PC-9 (cell line): ENCODE measurements at regions of chr20 and their contacts with region 1.

Region 1: GRCh38 chr20:33584976-33585375 is 77.2 kb upstream of the C20orf144 start:
- DNase-seq: no peak
- H3K4me3 ChIP-seq: no peak overlapping the region
- H3K27ac ChIP-seq: no peak overlapping the region
- H3K4me1 ChIP-seq: 0 out of 2 replicates have a peak, but pooled peaks cover 4% of the 10 kb centered on the region
- H3K27me3 ChIP-seq: no peaks in the 10 kb centered on the region
- CTCF ChIP-seq: no peak

Region 2: GRCh38 chr20:33554914-33555420 is 30.0 kb before region 1 on chr20:
- CTCF ChIA-PET with region 1: no interaction called
- POLR2A ChIA-PET with region 1: interaction called, 11 read pairs
- intact Hi-C with region 1: no loop called
- DNase-seq: peak; percentile 11 to 71
- H3K4me3 ChIP-seq: no peak overlapping the region
- H3K27ac ChIP-seq: 0 out of 2 replicates have a peak overlapping the region, but pooled peaks have one; percentile 9
- H3K4me1 ChIP-seq: peaks cover 13% of the 10 kb centered on the region
- H3K27me3 ChIP-seq: no peaks in the 10 kb centered on the region
- CTCF ChIP-seq: no peak

Region 3: DNA sequence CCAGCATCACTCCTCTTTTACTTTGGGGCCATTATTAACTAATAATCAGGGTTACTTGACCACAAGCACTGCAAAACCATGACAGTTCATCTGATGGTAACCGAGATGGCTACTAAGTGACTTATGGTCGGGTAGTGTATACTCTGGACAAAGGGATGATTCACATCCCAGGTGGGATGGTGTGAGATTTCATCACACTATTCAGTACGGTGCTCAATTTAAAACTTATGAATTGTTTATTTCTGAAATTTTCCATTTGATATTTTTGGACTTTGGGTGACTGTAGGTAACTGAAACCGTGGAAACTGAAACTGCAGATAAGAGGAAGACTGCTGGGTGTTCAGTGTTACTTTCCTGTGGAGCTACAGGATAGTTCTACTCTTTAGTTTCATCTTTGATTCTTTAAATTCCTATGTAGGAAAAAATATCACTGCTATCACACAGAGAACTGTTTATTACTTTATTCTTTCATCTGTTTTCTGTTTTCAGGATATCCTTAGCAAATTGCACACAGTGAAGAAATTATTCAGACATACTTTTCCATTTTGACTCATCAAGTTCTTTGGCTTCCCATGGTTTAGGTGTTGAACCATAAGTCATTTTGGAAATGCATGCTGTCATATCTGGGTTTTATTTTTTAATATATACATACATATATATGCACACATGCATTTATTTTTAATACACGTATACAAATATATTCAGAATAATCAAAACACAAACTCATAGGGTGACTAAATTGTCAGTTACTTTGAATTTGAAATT is 18.0 kb after region 1 on chr20:
- CTCF ChIA-PET with region 1: no interaction called
- POLR2A ChIA-PET with region 1: interaction called, 10 read pairs
- intact Hi-C with region 1: no loop called
- DNase-seq: no peak
- H3K4me3 ChIP-seq: no peak overlapping the region
- H3K27ac ChIP-seq: no peak overlapping the region
- H3K4me1 ChIP-seq: no peaks in the 10 kb centered on the region
- H3K27me3 ChIP-seq: no peaks in the 10 kb centered on the region
- CTCF ChIP-seq: no peak